Natural killer cell (primary cell): ENCODE measurements at regions of chr9 and their contacts with region 1.

Region 1: GRCh38 chr9:14633906-14634565 is 59.2 kb downstream of the ZDHHC21 start:
- DNase-seq: no peak
- ATAC-seq: no peak
- H3K4me3 ChIP-seq: no peak overlapping the region
- H3K4me3 Mint-ChIP-seq: no peak overlapping the region
- H3K27ac ChIP-seq: no peak overlapping the region
- H3K27ac Mint-ChIP-seq: no peak overlapping the region
- H3K4me1 ChIP-seq: no peaks in the 10 kb centered on the region
- H3K4me1 Mint-ChIP-seq: peaks cover 10 to 30% of the 10 kb centered on the region in 2 donors
- H3K27me3 ChIP-seq: no peaks in the 10 kb centered on the region
- H3K27me3 Mint-ChIP-seq: no peaks in the 10 kb centered on the region
- CTCF ChIP-seq: no peak

Region 2: GRCh38 chr9:14652729-14653377 is 18.8 kb after region 1 on chr9:
- intact Hi-C with region 1: loop called (anchors 2 kb)
- DNase-seq: no peak
- ATAC-seq: no peak
- H3K4me3 ChIP-seq: no peak overlapping the region
- H3K4me3 Mint-ChIP-seq: no peak overlapping the region
- H3K27ac ChIP-seq: no peak overlapping the region
- H3K27ac Mint-ChIP-seq: no peak overlapping the region
- H3K4me1 ChIP-seq: no peaks in the 10 kb centered on the region
- H3K4me1 Mint-ChIP-seq: peaks cover 0 to 7% of the 10 kb centered on the region in 2 donors
- H3K27me3 ChIP-seq: no peaks in the 10 kb centered on the region
- H3K27me3 Mint-ChIP-seq: no peaks in the 10 kb centered on the region
- CTCF ChIP-seq: no peak

Region 3: GRCh38 chr9:14693206-14693861 is 59.3 kb after region 1 on chr9 and contains the start of gene ZDHHC21:
- intact Hi-C with region 1: loop called (anchors 10 kb)
- DNase-seq: peak; percentile 52 to 62
- ATAC-seq: peak; percentile 87 to 92 (median 92)
- H3K4me3 ChIP-seq: peak within 1 kb of the TSS; percentile 54
- H3K4me3 Mint-ChIP-seq: peak within 1 kb of the TSS; percentile 94
- H3K27ac ChIP-seq: peak within 1 kb of the TSS; percentile 41
- H3K27ac Mint-ChIP-seq: peak within 1 kb of the TSS; percentile 69 to 89
- H3K4me1 ChIP-seq: peaks cover 10% of the 10 kb centered on the region
- H3K4me1 Mint-ChIP-seq: peaks cover 41 to 52% of the 10 kb centered on the region in 2 donors
- H3K27me3 ChIP-seq: no peaks in the 10 kb centered on the region
- H3K27me3 Mint-ChIP-seq: peaks cover 6% of the 10 kb centered on the region in 2 donors
- CTCF ChIP-seq: no peak
- total RNA-seq, gene ZDHHC21: 9.2 to 17.8 (median 12.9) TPM